WTC11 (cell line): ENCODE measurements at regions of chr4 and their contacts with region 1.

Region 1: DNA sequence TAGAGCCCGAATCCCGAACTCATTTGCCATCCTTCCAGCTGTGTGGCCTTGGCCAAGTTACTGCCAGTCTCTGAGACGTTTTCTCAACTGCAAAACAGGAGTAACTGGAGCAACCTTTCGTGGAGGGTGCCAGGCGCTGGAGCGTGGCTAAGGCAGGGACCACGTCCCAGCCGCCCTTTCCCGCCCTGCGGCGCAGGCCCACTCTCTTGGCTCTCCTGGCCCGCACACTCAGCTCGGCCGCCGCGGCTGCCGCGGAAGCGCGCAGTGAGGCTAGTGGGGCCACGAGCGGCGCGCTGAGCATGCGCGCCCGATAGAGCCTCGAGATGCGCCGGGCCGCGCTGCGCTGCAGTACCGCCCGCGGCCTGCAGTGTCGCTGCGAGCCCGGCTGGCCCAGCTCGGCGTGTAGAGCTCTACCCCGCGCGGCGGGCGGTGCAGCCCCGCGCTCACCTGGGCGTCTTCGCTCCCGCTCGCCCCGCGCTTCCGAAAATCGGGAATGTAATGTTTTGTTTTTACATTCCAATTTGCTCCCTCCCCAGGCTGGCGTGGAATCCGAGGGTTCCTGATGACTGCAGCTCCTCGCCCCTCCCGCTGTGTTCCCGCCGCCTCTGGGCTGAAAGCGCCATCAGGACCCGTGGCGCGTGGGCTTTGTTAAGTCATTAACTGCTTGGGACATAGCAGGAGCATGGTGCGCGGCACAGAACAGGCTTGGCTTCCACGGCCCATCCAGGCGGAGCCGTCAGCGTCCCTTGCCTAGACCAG is 4.0 kb upstream of the ZNF518B start:
- DNase-seq: peak; percentile 68
- ATAC-seq: peak; percentile 81
- H3K4me3 Mint-ChIP-seq: peak overlapping the region; percentile 89
- H3K27ac Mint-ChIP-seq: no peak overlapping the region
- H3K4me1 Mint-ChIP-seq: peaks cover 16% of the 10 kb centered on the region
- H3K27me3 Mint-ChIP-seq: peaks cover 84% of the 10 kb centered on the region
- CTCF ChIP-seq: peak; percentile 98

Region 2: DNA sequence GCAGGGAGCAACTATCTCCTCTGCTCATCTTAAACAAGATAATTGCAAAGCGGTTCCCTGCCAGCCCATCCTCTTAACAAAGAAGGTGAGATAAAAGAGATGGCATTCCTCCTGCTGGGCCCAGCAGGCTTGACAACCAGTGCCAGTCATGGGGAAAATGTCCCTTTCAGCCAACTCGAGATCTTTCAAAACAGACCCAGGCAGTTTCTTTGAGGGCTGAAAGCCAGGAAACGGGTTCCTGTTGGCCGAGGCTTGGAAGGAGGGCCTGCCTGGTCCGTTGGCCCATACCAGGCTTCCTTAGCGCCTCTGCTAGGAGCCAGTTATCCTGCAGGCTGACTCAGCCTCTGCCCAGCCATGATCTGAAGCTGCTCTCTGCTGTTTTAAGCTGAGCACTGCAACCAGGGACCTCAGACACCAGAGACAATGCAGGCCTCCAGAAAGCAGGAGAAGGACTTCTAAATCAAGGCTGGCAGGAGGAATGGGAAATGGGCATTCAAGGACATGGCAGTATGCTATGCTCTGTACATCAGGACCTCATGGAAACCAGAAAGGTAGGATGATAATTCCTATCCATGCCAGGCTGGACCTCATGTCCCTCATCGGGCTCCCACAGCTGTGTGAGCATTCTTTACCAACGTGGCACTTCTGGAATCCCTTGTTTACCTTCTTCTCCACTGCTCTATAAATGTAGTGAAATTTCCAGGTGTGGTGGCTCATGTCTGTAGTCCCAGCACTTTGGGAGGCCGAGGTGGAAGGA is 397.5 kb before region 1 on chr4:
- CTCF ChIA-PET with region 1: no interaction called
- POLR2A ChIA-PET with region 1: no interaction called
- DNase-seq: peak; percentile 48
- ATAC-seq: peak; percentile 99
- H3K4me3 Mint-ChIP-seq: no peak overlapping the region
- H3K27ac Mint-ChIP-seq: no peak overlapping the region
- H3K4me1 Mint-ChIP-seq: peaks cover 12% of the 10 kb centered on the region
- H3K27me3 Mint-ChIP-seq: no peaks in the 10 kb centered on the region
- CTCF ChIP-seq: no peak

Region 3: DNA sequence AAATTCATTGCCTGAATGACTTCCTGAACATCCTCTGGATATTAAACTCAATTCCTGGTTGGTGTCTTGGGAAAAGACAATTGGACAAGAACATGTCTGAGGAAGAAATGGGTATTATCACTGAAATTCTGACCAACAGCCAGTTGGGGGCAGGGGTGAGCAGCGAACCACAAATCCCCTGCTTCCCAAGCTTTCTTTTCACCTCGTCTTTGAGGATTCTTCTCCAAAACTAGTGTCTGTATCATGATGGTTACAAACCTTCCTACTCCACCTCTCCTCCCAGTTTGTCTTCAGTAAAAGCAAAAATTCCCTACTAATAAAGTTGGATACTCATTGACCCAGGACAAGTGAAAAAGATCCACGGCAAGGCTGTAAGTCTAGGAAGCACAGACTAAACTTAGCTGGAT is 296.4 kb before region 1 on chr4:
- CTCF ChIA-PET with region 1: interaction called, 14 read pairs
- POLR2A ChIA-PET with region 1: no interaction called
- DNase-seq: peak; percentile 61
- ATAC-seq: peak; percentile 68
- H3K4me3 Mint-ChIP-seq: no peak overlapping the region
- H3K27ac Mint-ChIP-seq: no peak overlapping the region
- H3K4me1 Mint-ChIP-seq: no peaks in the 10 kb centered on the region
- H3K27me3 Mint-ChIP-seq: no peaks in the 10 kb centered on the region; the same call in 1 of the 2 replicates
- CTCF ChIP-seq: peak; percentile 33

Region 4: GRCh38 chr4:10273030-10273429 is 188.2 kb before region 1 on chr4:
- CTCF ChIA-PET with region 1: no interaction called
- POLR2A ChIA-PET with region 1: no interaction called
- DNase-seq: no peak
- ATAC-seq: no peak
- H3K4me3 Mint-ChIP-seq: no peak overlapping the region
- H3K27ac Mint-ChIP-seq: no peak overlapping the region
- H3K4me1 Mint-ChIP-seq: no peaks in the 10 kb centered on the region
- H3K27me3 Mint-ChIP-seq: peaks cover 25% of the 10 kb centered on the region
- CTCF ChIP-seq: no peak

Region 5: GRCh38 chr4:10478621-10479020 is 17.4 kb after region 1 on chr4:
- CTCF ChIA-PET with region 1: interaction called, 20 read pairs
- POLR2A ChIA-PET with region 1: no interaction called
- DNase-seq: no peak
- ATAC-seq: peak; percentile 44
- H3K4me3 Mint-ChIP-seq: no peak overlapping the region
- H3K27ac Mint-ChIP-seq: no peak overlapping the region
- H3K4me1 Mint-ChIP-seq: peaks cover 10% of the 10 kb centered on the region
- H3K27me3 Mint-ChIP-seq: no peaks in the 10 kb centered on the region; the same call in 1 of the 2 replicates
- CTCF ChIP-seq: no peak

Region 6: DNA sequence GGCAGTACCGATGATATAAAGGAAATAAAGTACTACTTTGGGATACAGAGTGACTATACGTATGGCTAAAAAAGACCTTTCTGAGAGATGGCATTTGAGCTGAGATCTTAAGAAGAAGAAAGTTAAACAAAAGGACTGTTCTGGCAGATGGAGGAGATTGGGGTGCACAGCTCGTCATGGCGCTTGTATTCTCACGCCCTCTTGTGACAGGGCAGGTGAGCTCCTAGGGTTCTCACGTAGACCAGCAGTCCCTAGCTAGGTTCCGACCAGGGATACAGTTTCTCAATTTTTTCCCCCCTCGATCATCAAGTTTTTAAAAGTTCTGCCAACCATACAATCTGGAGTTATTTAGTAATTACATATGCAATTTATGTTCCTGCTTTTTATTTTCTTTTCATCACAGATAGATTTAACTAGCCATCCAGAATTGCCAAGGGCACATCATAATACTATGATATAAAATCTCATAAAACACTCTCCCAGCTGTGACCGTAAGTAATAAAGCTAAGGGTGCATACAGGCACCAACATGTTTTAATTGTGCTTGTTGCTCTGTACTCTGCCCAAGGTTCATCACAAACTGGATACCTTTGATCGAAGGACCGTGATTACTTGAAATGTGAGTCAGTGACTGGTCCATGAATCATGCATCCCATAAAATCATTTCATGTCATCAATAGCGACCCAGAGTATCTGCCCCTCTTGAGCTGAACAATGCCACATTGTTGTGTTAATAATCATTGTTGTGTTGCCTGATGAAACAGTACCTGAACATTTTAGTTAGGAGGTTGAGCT is 65.4 kb after region 1 on chr4:
- CTCF ChIA-PET with region 1: interaction called, 47 read pairs
- POLR2A ChIA-PET with region 1: no interaction called
- DNase-seq: peak; percentile 27
- ATAC-seq: peak; percentile 92
- H3K4me3 Mint-ChIP-seq: no peak overlapping the region
- H3K27ac Mint-ChIP-seq: no peak overlapping the region
- H3K4me1 Mint-ChIP-seq: peaks cover 11% of the 10 kb centered on the region
- H3K27me3 Mint-ChIP-seq: no peaks in the 10 kb centered on the region; the same call in 1 of the 2 replicates
- CTCF ChIP-seq: no peak

Region 7: GRCh38 chr4:10622728-10623127 is 161.5 kb after region 1 on chr4:
- CTCF ChIA-PET with region 1: no interaction called
- POLR2A ChIA-PET with region 1: no interaction called
- DNase-seq: no peak
- ATAC-seq: peak; percentile 41; the same call in 1 of the 2 replicates
- H3K4me3 Mint-ChIP-seq: no peak overlapping the region
- H3K27ac Mint-ChIP-seq: no peak overlapping the region
- H3K4me1 Mint-ChIP-seq: no peaks in the 10 kb centered on the region
- H3K27me3 Mint-ChIP-seq: peaks cover 8% of the 10 kb centered on the region
- CTCF ChIP-seq: no peak